Endothelial cell of umbilical vein (primary cell): ENCODE measurements at regions of chr4 and their contacts with region 1.

Region 1: GRCh38 chr4:25312496-25313200 is at the start of gene ZCCHC4:
- DNase-seq: peak; percentile 93
- H3K4me3 ChIP-seq: peak within 1 kb of the TSS; percentile 63 to 92 (median 87)
- H3K27ac ChIP-seq: peak within 1 kb of the TSS; percentile 34
- H3K4me1 ChIP-seq: peaks cover 5% of the 10 kb centered on the region
- H3K27me3 ChIP-seq: no peaks in the 10 kb centered on the region
- CTCF ChIP-seq: peak; percentile 100
- POLR2A ChIP-seq: peak; percentile 80
- total RNA-seq, gene ZCCHC4: 9.9 and 10.9 TPM in 2 replicates

Region 2: DNA sequence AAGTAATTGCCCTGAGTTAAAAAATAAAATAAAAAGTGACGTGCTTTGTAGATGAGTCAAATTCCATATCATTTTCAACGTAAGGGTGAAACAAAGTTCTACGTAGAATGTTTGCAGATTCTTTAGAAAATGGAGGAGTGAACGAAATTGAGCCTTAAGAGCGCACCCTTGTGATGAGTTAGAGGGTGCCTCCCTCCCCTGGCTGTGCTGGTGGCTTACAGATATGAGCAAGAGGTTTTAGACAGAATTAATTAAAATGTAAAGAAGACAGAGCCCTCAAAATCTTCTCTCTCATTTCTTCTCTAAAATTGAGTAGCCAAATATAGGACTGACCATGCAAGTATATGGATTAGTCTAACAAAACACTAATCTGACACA is 251.7 kb before region 1 on chr4:
- CTCF ChIA-PET with region 1: no interaction called
- POLR2A ChIA-PET with region 1: no interaction called
- dilution Hi-C with region 1: no loop called
- intact Hi-C with region 1: no loop called
- DNase-seq: no peak
- H3K4me3 ChIP-seq: no peak overlapping the region
- H3K27ac ChIP-seq: no peak overlapping the region
- H3K4me1 ChIP-seq: no peaks in the 10 kb centered on the region
- H3K27me3 ChIP-seq: peaks cover 0 to 9% of the 10 kb centered on the region in 2 experiments
- CTCF ChIP-seq: no peak
- POLR2A ChIP-seq: no peak

Region 3: DNA sequence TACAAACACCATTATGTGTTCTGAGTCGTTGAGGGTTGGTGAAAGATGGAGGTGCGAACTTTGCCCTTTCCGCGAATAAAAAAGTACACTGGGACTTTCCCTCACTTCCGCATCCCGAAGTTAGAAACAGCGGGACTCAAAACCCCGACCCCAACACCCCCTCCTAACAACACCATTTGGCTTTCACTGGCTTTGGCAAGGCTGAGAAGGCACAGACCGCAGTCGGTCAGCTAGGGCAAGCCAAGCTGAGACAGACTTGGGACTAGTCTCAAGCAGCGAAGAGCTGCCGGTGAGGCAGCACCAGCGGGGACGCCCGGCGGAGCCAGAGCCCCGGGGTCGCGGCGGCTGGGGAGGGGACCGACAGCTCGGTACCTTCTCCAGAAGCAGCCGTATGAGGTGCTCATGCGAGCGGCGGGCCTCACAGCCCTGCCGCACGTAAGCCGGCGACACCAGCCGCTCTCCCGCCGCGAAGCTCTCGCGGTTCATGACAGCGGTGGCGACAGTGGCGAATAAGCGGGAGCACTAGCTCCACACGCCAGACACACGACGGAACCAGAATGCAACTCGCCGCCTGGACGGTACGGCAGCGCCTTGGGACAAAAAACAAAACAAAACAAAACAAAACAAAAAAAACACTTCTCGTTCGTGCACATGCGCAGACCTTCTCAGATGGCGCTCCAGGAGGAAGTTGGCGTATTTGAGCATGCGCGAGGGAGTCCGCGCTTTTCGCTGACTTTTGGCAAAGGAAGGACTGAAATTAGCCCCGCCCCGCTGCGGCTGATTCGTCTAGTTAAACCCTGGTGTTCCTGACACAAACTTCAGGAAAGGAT is 152.5 kb before region 1 on chr4 and contains the start of gene SEPSECS:
- CTCF ChIA-PET with region 1: interaction called, 10 read pairs
- POLR2A ChIA-PET with region 1: no interaction called
- dilution Hi-C with region 1: no loop called
- intact Hi-C with region 1: loop called (anchors 1 kb)
- DNase-seq: peak; percentile 99
- H3K4me3 ChIP-seq: peak within 1 kb of the TSS; percentile 39 to 94 (median 84)
- H3K27ac ChIP-seq: peak within 1 kb of the TSS; percentile 81
- H3K4me1 ChIP-seq: peaks cover 7% of the 10 kb centered on the region
- H3K27me3 ChIP-seq: no peaks in the 10 kb centered on the region
- CTCF ChIP-seq: no peak
- POLR2A ChIP-seq: peak; percentile 87
- total RNA-seq, gene SEPSECS: 5.8 and 8.3 TPM in 2 replicates

Region 4: GRCh38 chr4:25180524-25181131 is 132.0 kb before region 1 on chr4:
- CTCF ChIA-PET with region 1: interaction called, 10 read pairs
- POLR2A ChIA-PET with region 1: no interaction called
- dilution Hi-C with region 1: no loop called
- intact Hi-C with region 1: loop called (anchors 1 kb)
- DNase-seq: peak; percentile 36
- H3K4me3 ChIP-seq: no peak overlapping the region
- H3K27ac ChIP-seq: no peak overlapping the region
- H3K4me1 ChIP-seq: no peaks in the 10 kb centered on the region
- H3K27me3 ChIP-seq: no peaks in the 10 kb centered on the region
- CTCF ChIP-seq: peak; percentile 48 to 55
- POLR2A ChIP-seq: no peak

Region 5: DNA sequence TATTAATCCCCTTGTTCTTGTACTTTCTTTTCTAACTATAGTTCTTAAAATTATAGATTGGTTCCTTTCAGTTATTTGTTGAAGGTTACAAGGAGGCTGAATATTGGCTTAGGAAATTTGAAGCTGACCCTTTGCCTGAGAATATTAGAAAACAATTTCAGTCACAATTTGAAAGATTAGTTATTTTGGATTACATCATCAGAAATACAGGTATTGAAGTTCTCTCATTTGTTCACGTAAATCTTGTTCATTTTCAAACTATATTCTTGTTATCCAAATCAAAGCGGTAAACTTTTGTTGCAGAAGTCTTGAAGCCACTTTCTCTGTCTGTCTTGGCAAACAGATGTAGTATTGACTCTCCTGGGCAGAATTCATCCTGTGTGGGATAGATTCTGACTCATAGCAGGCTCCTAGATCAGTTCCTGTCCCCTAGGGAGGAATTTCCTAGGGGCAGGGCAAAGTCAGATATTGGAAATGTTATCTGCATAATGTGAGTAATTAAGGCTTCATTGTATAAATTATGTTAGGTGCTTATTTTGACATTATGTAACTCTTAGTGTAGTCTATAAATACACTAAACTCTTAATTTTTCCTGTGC is 53.6 kb before region 1 on chr4:
- CTCF ChIA-PET with region 1: interaction called, 12 read pairs
- POLR2A ChIA-PET with region 1: no interaction called
- dilution Hi-C with region 1: no loop called
- intact Hi-C with region 1: loop called (anchors 2 kb)
- DNase-seq: peak; percentile 67
- H3K4me3 ChIP-seq: no peak overlapping the region
- H3K27ac ChIP-seq: peak overlapping the region; percentile 32
- H3K4me1 ChIP-seq: peaks cover 15% of the 10 kb centered on the region
- H3K27me3 ChIP-seq: no peaks in the 10 kb centered on the region
- CTCF ChIP-seq: no peak
- POLR2A ChIP-seq: no peak

Region 6: DNA sequence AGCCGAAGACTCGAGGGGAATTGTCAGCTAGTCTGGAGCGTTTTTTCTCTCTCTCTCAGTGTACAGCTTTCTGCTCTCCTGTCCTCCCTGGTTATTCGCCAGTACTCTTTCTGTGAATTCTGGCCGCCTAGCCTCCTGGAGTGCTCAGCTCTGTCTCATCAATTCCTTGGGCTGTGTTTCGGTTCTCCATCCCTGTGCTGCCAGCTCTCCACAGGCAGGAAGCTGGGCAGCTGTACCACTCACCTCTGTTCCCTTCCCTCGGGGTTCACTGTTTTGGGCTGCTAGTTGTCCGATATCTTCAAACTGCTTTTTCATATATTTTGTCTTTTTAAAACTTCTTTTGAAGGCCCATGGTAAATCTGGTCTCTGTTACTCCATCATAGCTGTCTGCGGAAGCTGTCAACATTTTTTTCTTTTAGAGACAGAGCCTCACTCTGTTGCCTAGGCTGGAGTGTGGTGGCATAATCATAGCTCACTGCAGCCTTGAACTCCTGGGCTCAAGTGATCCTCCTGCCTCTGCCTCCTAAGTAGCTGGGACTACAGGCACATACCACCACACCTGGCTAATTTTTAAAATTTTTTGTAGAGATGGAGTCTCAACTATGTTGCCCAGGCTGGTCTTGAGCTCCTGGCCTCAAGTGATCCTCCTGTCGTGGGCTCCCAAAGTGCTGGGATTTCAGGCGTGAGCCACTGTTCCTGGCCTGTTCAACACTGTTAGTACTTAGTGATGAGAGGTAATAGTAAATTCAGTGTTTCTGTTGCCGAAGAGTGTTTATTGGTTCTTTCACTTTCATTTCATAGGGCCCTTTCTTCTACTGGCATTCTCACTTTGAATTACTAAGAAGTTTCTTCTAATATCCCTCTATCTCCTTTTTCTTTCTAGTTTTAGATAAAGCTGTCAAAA is 18.5 kb after region 1 on chr4:
- CTCF ChIA-PET with region 1: interaction called, 17 read pairs
- POLR2A ChIA-PET with region 1: no interaction called
- dilution Hi-C with region 1: no loop called
- intact Hi-C with region 1: no loop called
- DNase-seq: no peak
- H3K4me3 ChIP-seq: no peak overlapping the region
- H3K27ac ChIP-seq: no peak overlapping the region
- H3K4me1 ChIP-seq: no peaks in the 10 kb centered on the region
- H3K27me3 ChIP-seq: no peaks in the 10 kb centered on the region
- CTCF ChIP-seq: no peak
- POLR2A ChIP-seq: no peak

Region 7: GRCh38 chr4:25358515-25359275 is 46.0 kb after region 1 on chr4:
- CTCF ChIA-PET with region 1: interaction called, 12 read pairs
- POLR2A ChIA-PET with region 1: no interaction called
- dilution Hi-C with region 1: no loop called
- intact Hi-C with region 1: no loop called
- DNase-seq: no peak
- H3K4me3 ChIP-seq: no peak overlapping the region
- H3K27ac ChIP-seq: no peak overlapping the region
- H3K4me1 ChIP-seq: no peaks in the 10 kb centered on the region
- H3K27me3 ChIP-seq: no peaks in the 10 kb centered on the region
- CTCF ChIP-seq: no peak
- POLR2A ChIP-seq: no peak

Region 8: GRCh38 chr4:25376754-25377571 is 64.3 kb after region 1 on chr4 and contains the start of gene ANAPC4:
- CTCF ChIA-PET with region 1: interaction called, 10 read pairs
- POLR2A ChIA-PET with region 1: no interaction called
- dilution Hi-C with region 1: no loop called
- intact Hi-C with region 1: loop called (anchors 1 kb)
- DNase-seq: peak; percentile 82
- H3K4me3 ChIP-seq: peak within 1 kb of the TSS; percentile 71 to 96 (median 87)
- H3K27ac ChIP-seq: peak within 1 kb of the TSS; percentile 40
- H3K4me1 ChIP-seq: peaks cover 11% of the 10 kb centered on the region
- H3K27me3 ChIP-seq: no peaks in the 10 kb centered on the region
- CTCF ChIP-seq: no peak
- POLR2A ChIP-seq: peak; percentile 75
- total RNA-seq, gene ANAPC4: 23.5 and 32.1 TPM in 2 replicates

Region 9: DNA sequence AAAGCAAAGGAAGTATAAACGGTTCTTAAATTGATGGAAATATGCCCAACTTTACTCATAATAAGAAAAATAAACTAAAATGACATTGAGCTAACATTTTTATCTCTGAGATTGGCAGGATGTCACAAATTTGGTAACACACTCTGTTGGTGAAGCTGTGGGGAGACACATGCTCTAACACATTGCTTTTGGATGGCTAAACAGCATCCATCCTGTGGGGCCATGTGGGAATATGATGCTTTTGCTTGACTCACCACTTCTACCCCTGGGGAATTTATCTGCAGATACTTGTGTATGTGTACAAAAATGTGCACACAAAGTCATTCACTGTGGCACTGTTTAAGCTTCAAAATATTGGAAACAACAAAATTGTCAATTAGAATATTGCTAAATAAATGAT is 164.6 kb after region 1 on chr4:
- CTCF ChIA-PET with region 1: no interaction called
- POLR2A ChIA-PET with region 1: no interaction called
- dilution Hi-C with region 1: no loop called
- intact Hi-C with region 1: no loop called
- DNase-seq: no peak
- H3K4me3 ChIP-seq: no peak overlapping the region
- H3K27ac ChIP-seq: no peak overlapping the region
- H3K4me1 ChIP-seq: no peaks in the 10 kb centered on the region
- H3K27me3 ChIP-seq: no peaks in the 10 kb centered on the region
- CTCF ChIP-seq: no peak
- POLR2A ChIP-seq: no peak